Activated CD4-positive, alpha-beta memory T cell treated with anti-CD3 and anti-CD28 coated beads, Interleukin-2, amount 10 ng/mL, durations not matched to agents 7 days and 5 days (primary cell): ENCODE measurements at regions of chr5 and their contacts with region 1.

Region 1: DNA sequence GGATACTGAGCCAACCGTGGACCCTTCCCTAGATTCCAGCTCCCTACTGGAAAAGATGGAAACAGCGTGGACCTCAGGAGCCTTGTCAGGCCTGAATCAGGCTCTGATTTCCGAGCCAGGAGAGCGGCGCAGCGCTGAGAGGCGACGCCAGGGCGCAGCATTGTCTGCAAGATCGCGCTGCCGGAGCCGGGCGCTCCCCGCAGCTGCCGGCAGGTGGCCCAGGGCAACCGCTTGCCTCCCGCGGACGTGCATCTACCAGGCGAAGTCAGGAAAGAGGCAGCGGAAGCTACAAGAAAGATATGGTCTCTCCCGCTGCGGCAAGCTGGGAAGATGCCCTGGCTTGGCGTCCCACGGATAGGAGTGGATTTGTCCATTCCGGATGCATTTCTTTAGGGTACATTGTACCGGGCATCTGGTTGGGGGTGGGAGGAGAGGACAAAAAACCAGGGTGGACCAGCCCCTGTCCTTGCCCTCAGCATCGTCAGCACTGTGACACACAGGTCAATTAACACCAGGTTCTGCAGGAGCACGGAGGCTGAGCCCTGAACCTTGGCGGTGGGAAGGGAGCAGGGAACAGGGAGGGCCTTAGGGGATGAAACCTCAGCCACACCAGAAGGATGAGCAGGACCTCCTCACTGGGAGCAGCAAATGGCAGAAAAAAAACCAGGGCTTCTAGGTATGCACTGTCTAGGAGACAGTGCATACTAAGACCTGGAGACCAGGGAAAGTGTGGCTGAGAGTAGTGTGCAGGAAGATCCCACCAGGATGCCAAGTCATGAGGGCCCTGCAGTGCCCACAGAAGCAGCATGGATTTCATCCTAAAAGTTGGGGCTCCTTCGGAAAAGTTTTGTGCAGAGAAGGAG is 55.9 kb downstream of the SFXN1 start:
- DNase-seq: peak; percentile 86
- H3K4me3 Mint-ChIP-seq: peak overlapping the region; percentile 45
- H3K27ac Mint-ChIP-seq: no peak overlapping the region
- H3K4me1 Mint-ChIP-seq: peaks cover 35% of the 10 kb centered on the region
- H3K27me3 Mint-ChIP-seq: no peaks in the 10 kb centered on the region

Region 2: GRCh38 chr5:175524211-175524610 is 10.1 kb before region 1 on chr5:
- CTCF ChIA-PET with region 1: interaction called, 14 read pairs
- POLR2A ChIA-PET with region 1: interaction called, 5 read pairs
- DNase-seq: no peak
- H3K4me3 Mint-ChIP-seq: no peak overlapping the region
- H3K27ac Mint-ChIP-seq: peak overlapping the region; percentile 17
- H3K4me1 Mint-ChIP-seq: peaks cover 51% of the 10 kb centered on the region
- H3K27me3 Mint-ChIP-seq: no peaks in the 10 kb centered on the region

Region 3: GRCh38 chr5:175696139-175696854 is 162.0 kb after region 1 on chr5:
- CTCF ChIA-PET with region 1: interaction called, 79 read pairs
- POLR2A ChIA-PET with region 1: interaction called, 4 read pairs
- DNase-seq: peak; percentile 81
- H3K4me3 Mint-ChIP-seq: no peak overlapping the region
- H3K27ac Mint-ChIP-seq: peak overlapping the region; percentile 2
- H3K4me1 Mint-ChIP-seq: peaks cover 21% of the 10 kb centered on the region
- H3K27me3 Mint-ChIP-seq: no peaks in the 10 kb centered on the region

Region 4: DNA sequence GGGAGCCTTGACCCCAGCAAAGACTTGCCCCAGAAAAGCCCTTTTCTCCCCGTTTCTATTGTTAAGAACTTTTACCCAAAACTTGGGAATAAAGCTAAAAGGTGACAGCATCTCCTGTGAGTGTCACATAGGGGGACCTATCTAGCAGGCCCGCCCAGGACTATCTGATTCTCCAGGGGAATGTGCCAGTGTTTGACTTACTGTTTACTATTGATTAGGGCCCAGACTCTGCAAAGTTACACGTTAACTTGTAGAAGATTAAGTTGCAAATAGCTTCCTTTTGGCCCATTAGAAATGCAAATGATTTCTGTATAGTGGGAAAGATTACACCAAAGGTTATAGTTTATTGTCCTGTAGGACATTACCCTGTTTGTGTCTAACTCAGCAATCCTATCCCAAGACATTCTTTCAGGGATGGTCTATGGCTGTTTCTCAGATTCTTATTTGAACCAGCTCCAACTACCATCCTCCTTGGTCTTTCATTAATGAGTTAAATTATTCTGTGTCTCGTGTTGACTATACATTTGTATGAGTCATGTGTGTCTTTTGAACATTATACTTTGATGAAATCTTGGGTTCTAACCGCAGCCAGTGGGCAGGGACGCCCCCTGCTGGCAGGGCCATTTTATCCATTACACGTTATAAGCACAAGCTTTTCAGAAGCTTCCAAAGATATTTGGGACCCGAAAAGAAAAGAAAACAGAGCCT is 184.3 kb after region 1 on chr5:
- CTCF ChIA-PET with region 1: interaction called, 59 read pairs
- POLR2A ChIA-PET with region 1: no interaction called
- DNase-seq: peak; percentile 67
- H3K4me3 Mint-ChIP-seq: no peak overlapping the region
- H3K27ac Mint-ChIP-seq: no peak overlapping the region
- H3K4me1 Mint-ChIP-seq: no peaks in the 10 kb centered on the region
- H3K27me3 Mint-ChIP-seq: peaks cover 2% of the 10 kb centered on the region